Caco-2 (cell line): ENCODE measurements at regions of chr19 and their contacts with region 1.

Region 1: DNA sequence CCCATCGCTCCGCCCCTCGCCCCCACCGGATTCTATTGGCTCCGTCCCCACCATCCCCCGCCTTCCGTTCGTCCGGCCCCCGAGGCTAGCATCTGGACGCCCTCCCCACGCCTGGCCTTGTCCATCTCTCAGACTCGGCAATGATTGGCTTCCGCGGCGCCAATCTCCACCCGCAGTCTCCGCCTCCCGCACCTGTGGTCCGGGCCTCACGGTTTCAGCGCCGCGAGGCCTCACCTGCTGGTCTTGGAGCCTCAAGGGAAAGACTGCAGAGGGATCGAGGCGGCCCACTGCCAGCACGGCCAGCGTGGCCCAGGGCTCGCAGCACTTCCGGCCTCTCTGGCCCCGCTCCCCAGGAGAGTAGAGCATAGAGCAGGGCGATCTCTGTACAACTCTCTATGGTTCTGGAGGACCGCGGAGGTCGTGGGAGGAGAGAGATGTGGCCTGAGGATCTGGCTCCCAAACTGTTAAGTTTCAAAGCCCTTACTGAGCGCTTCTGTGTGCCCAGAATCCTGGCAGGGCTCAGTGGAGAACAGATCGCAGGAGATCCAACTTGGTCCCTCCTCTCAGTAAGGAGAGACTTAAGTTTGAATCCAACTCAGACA is at the start of gene ERCC1:
- DNase-seq: peak; percentile 99 to 100
- H3K4me3 ChIP-seq: peak within 1 kb of the TSS; percentile 65
- H3K4me3 Mint-ChIP-seq: peak within 1 kb of the TSS; percentile 86
- H3K27ac Mint-ChIP-seq: peak within 1 kb of the TSS; percentile 89
- H3K4me1 ChIP-seq: peaks cover 15% of the 10 kb centered on the region
- H3K4me1 Mint-ChIP-seq: peaks cover 20% of the 10 kb centered on the region
- H3K27me3 ChIP-seq: no peaks in the 10 kb centered on the region
- H3K27me3 Mint-ChIP-seq: no peaks in the 10 kb centered on the region
- CTCF ChIP-seq: no peak
- total RNA-seq, gene ERCC1: 43.5 and 51.0 TPM in 2 replicates

Region 2: DNA sequence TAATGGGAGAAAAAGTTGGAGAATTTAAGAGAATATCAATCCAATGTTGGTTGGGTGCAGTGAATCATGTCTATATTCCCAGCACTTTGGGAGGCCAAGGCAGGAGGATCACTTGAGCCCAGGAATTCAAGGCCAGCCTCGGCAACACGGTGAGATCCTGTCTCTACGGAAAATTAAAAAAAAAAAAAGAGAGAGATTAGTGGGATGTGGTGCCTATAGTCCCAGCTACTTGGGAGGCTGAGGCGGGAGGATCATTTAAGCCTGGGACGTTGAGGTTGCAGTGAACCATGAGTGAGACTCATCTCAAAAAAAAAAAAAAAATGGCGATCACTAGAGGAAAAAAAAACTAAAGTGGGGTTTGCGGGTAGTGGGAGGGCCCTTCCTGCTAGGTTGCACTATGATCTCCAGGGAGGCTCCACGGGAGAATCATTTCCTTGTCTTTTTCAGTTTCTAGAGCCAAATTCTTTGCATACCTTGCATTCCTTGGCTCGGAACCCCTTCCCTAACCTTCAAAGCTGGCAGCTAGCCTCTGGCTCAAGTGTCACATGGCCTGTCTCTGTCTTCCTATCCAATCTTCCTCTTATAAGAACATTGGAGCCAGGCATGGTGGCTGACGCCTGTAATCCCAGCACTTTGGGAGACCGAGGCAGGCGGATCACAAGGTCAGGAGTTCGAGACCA is 47.5 kb before region 1 on chr19:
- CTCF ChIA-PET with region 1: no interaction called
- POLR2A ChIA-PET with region 1: interaction called, 4 read pairs
- intact Hi-C with region 1: loop called (anchors 5 kb)
- DNase-seq: peak; percentile 84 to 93
- H3K4me3 ChIP-seq: no peak overlapping the region
- H3K4me3 Mint-ChIP-seq: peak overlapping the region; percentile 45
- H3K27ac Mint-ChIP-seq: peak overlapping the region; percentile 93
- H3K4me1 ChIP-seq: peaks cover 17% of the 10 kb centered on the region
- H3K4me1 Mint-ChIP-seq: peaks cover 12% of the 10 kb centered on the region
- H3K27me3 ChIP-seq: no peaks in the 10 kb centered on the region
- H3K27me3 Mint-ChIP-seq: no peaks in the 10 kb centered on the region
- CTCF ChIP-seq: no peak

Region 3: GRCh38 chr19:45455707-45456499 is 32.2 kb after region 1 on chr19:
- CTCF ChIA-PET with region 1: no interaction called
- POLR2A ChIA-PET with region 1: no interaction called
- intact Hi-C with region 1: loop called (anchors 1 kb)
- DNase-seq: peak; percentile 95
- H3K4me3 ChIP-seq: no peak overlapping the region
- H3K4me3 Mint-ChIP-seq: peak overlapping the region; percentile 46
- H3K27ac Mint-ChIP-seq: peak overlapping the region; percentile 96
- H3K4me1 ChIP-seq: peaks cover 26% of the 10 kb centered on the region
- H3K4me1 Mint-ChIP-seq: peaks cover 30% of the 10 kb centered on the region
- H3K27me3 ChIP-seq: no peaks in the 10 kb centered on the region
- H3K27me3 Mint-ChIP-seq: no peaks in the 10 kb centered on the region
- CTCF ChIP-seq: no peak

Region 4: GRCh38 chr19:45467456-45468158 is 43.9 kb after region 1 on chr19 and contains the start of gene FOSB:
- CTCF ChIA-PET with region 1: no interaction called
- POLR2A ChIA-PET with region 1: no interaction called
- intact Hi-C with region 1: no loop called
- DNase-seq: peak; percentile 96 to 97
- H3K4me3 ChIP-seq: peak within 1 kb of the TSS; percentile 74
- H3K4me3 Mint-ChIP-seq: peak within 1 kb of the TSS; percentile 92
- H3K27ac Mint-ChIP-seq: peak within 1 kb of the TSS; percentile 98
- H3K4me1 ChIP-seq: peaks cover 9% of the 10 kb centered on the region; the same call in 1 of the 2 replicates
- H3K4me1 Mint-ChIP-seq: peaks cover 2% of the 10 kb centered on the region
- H3K27me3 ChIP-seq: no peaks in the 10 kb centered on the region
- H3K27me3 Mint-ChIP-seq: no peaks in the 10 kb centered on the region
- CTCF ChIP-seq: no peak
- total RNA-seq, gene FOSB: 6.4 TPM in 2 replicates

Region 5: GRCh38 chr19:45478454-45479238 is 55.0 kb after region 1 on chr19:
- CTCF ChIA-PET with region 1: interaction called, 14 read pairs
- POLR2A ChIA-PET with region 1: no interaction called
- intact Hi-C with region 1: loop called (anchors 2 kb)
- DNase-seq: peak; percentile 92 to 94
- H3K4me3 ChIP-seq: peak overlapping the region; percentile 53
- H3K4me3 Mint-ChIP-seq: peak overlapping the region; percentile 53
- H3K27ac Mint-ChIP-seq: peak overlapping the region; percentile 99
- H3K4me1 ChIP-seq: 0 out of 2 replicates have a peak, but pooled peaks cover 4% of the 10 kb centered on the region
- H3K4me1 Mint-ChIP-seq: peaks cover 7% of the 10 kb centered on the region
- H3K27me3 ChIP-seq: no peaks in the 10 kb centered on the region
- H3K27me3 Mint-ChIP-seq: peaks cover 2% of the 10 kb centered on the region
- CTCF ChIP-seq: peak; percentile 94 to 96

Region 6: DNA sequence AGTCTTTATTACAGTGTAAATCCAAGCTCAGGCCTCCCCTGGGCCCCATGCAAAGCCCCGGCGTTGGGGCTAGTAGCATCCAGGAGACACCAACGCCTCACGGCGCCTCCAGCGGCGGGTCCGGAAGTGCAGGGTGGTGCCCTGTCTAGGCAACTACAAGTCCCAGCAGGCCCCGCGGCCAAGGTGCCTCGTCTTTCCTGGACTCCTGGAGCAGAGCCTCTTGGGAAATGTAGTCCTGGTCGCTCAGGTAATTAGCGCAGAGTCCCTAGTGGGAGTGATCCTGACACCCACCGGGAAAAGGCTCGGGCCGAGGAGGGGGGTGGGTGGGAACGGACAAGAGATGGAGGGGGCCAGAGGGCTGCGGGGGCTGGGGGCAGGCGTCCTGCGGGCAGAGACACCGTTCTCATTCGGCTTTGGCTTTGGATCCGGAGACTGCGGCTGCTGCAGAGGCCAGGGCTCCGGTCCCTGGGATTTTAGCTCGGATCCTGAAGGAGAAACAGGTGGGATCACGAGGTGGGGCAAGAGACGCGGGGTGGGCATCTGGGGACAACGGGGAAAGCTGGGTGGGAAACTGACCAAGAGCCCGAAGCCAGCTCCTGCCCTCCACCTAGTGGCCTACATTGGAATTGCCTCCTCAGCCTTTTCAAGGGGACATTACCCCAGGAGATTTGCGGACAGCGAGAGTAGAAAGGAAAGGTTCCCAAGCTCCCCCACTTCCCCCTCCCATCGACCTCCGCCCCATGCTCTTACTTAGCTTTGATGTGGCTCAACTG is 61.8 kb after region 1 on chr19:
- CTCF ChIA-PET with region 1: interaction called, 18 read pairs
- POLR2A ChIA-PET with region 1: no interaction called
- intact Hi-C with region 1: loop called (anchors 2 kb)
- DNase-seq: peak; percentile 98
- H3K4me3 ChIP-seq: peak overlapping the region; percentile 66
- H3K4me3 Mint-ChIP-seq: peak overlapping the region; percentile 88
- H3K27ac Mint-ChIP-seq: peak overlapping the region; percentile 74
- H3K4me1 ChIP-seq: no peaks in the 10 kb centered on the region
- H3K4me1 Mint-ChIP-seq: peaks cover 6% of the 10 kb centered on the region
- H3K27me3 ChIP-seq: no peaks in the 10 kb centered on the region
- H3K27me3 Mint-ChIP-seq: no peaks in the 10 kb centered on the region
- CTCF ChIP-seq: peak; percentile 91 to 92

Region 7: GRCh38 chr19:45515081-45515624 is 91.5 kb after region 1 on chr19:
- CTCF ChIA-PET with region 1: no interaction called
- POLR2A ChIA-PET with region 1: no interaction called
- intact Hi-C with region 1: no loop called
- DNase-seq: no peak
- H3K4me3 ChIP-seq: no peak overlapping the region
- H3K4me3 Mint-ChIP-seq: no peak overlapping the region
- H3K27ac Mint-ChIP-seq: no peak overlapping the region
- H3K4me1 ChIP-seq: peaks cover 17% of the 10 kb centered on the region
- H3K4me1 Mint-ChIP-seq: peaks cover 15% of the 10 kb centered on the region
- H3K27me3 ChIP-seq: no peaks in the 10 kb centered on the region
- H3K27me3 Mint-ChIP-seq: no peaks in the 10 kb centered on the region
- CTCF ChIP-seq: no peak